HEK293T (cell line): ENCODE measurements at regions of chr18 and their contacts with region 1.

Region 1: GRCh38 chr18:35949903-35950627 is 22.4 kb upstream of the RMP24 start:
- DNase-seq: peak; percentile 91

Region 2: GRCh38 chr18:35938158-35938557 is 11.9 kb before region 1 on chr18:
- CTCF ChIA-PET with region 1: interaction called, 21 read pairs
- POLR2A ChIA-PET with region 1: interaction called, 3 read pairs
- DNase-seq: no peak

Region 3: DNA sequence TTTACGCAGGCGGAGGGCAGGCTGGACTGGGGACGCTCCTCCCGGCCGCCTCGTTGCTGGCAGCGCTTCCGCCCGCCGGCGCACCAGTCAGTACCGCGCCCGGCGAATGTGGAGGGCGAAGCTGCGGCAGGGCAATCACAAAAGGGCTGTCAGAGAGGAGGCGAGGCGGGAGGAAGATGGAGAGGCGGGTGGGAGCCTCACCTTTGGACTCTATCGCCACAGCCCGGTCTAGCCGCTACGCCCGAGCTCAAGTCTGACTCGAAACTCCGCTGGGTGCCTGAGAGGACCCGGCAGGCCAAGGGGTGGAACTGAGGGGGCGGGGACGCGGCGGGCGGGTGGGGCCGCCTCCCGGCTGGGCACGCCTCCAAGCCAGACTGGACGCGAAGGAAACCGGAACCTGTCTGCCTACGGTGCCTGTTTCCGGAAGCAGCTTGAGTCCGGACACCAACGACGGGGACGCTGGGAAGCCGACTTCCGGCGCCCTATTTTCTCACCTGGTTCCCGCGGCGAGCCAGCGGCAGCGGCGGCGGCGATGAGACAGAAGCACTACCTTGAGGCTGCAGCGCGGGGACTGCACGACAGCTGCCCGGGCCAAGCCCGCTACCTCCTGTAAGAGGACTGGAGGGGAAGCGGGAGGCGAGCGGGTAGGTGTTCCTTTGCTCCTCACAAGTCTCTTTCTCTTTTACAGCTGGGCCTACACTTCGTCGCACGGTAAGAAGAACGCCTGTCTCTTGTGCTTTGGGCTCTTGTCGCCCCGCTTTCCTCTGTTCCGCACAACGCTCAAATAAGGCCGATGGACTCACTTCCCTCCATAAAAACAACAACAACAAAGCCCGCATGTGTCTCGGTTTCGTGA is 22.4 kb after region 1 on chr18 and contains the start of gene RMP24:
- CTCF ChIA-PET with region 1: interaction called, 5 read pairs
- POLR2A ChIA-PET with region 1: interaction called, 10 read pairs
- DNase-seq: peak; percentile 100